Heart right ventricle (tissue), 16 donors: ENCODE measurements at regions of chr22 and their contacts with region 1.

Region 1: DNA sequence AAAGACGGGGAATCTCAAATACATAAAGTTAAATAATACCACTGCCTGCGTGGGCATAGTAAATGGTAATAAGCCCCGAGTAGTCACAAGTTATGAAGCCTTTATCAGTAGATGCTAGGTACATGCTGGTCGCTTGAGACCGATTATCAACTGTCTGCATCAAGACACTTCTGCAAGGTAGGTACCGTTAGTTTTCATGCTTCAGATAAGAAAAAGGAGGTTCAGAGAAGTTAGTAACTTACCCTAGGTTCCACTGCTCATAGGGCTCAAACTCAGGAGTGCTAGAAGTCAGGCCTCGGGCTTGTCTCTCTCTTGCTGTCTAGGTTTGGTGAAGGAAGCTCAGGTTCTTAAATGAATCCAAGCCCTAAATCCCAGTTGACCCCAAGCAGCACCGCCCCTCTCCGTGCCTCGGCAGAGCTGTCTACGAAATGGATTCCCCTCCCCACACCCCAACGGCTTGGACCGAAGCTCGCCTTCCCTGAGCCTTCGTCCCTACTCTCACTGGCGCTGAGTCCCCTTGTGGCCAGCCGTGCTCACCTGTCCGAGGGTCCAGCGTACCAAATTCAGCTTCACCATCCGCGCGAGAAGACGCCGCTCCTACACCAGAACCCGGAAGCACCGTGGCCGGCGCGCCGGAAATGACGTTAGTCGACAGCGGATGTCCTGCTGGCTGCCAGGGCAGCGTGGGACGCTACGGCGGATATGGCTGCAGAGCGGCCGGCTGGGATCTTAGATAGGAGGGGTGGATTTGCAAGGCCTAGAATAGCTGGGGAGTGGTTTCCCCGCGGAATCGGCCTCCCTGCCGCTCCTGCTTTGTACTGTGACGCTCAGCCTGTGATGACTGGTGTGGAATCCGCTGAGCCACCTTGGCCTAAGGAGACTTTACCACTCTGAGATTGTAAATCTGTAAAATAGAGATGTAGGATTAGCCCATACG is at the start of gene TFIP11:
- DNase-seq: peak; percentile 95 to 96
- ATAC-seq: peak; percentile 96 to 100 (median 99)
- H3K4me3 ChIP-seq: peak within 1 kb of the TSS; percentile 65 to 100 (median 82)
- H3K27ac ChIP-seq: peak within 1 kb of the TSS in 9 of 10 donors; percentile 56 to 93 (median 82)
- H3K4me1 ChIP-seq: peaks cover 0 to 31% (median 22%) of the 10 kb centered on the region in 9 donors
- H3K27me3 ChIP-seq: no peaks in the 10 kb centered on the region
- CTCF ChIP-seq: no peak
- total RNA-seq, gene TFIP11: 18.8 to 25.5 (median 22.8) TPM

Region 2: DNA sequence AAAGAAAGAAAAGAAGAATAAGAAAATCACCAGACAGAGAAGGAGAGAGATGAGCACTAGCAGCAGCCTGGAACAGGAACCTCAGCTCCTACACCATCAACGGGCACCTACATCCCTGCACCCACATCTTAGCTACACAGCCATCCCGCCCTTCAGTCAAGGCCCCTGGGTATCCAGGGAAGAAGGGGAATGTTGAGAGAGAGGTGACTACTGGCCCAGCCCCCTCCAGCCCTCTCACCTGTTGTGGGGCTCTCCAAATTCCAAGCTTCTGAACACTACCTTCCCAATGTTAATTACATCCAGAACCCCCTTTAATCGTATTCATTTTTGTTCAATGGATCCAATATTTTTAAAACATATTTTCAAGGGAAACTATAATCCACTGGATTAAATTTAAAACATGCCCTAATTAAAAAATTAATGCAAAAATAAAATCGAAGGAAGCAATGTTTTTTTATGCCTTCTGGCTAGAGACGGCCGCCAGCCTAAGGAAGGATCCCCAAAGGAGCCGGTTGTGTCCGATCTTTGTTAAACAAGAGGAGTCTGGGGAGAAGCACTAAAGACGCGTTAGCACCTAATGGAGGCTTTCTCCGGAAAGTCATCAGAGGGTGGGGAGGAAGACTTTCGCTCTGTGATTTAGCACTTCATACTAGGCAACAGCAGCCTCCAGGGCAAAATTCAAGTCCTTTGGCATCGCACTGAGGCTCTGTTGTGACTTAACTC is 68.3 kb after region 1 on chr22:
- intact Hi-C with region 1: loop called in 6 of 10 experiments (anchors 5 to 10 kb)
- DNase-seq: no peak
- ATAC-seq: no peak
- H3K4me3 ChIP-seq: no peak overlapping the region
- H3K27ac ChIP-seq: peak overlapping the region in 1 of 10 donors; percentile 73
- H3K4me1 ChIP-seq: peaks cover 6 to 56% (median 35%) of the 10 kb centered on the region in 9 donors
- H3K27me3 ChIP-seq: no peaks in the 10 kb centered on the region
- CTCF ChIP-seq: no peak